ENCODE measurements at regions of chr3 and their contacts with region 1.

Region 1: DNA sequence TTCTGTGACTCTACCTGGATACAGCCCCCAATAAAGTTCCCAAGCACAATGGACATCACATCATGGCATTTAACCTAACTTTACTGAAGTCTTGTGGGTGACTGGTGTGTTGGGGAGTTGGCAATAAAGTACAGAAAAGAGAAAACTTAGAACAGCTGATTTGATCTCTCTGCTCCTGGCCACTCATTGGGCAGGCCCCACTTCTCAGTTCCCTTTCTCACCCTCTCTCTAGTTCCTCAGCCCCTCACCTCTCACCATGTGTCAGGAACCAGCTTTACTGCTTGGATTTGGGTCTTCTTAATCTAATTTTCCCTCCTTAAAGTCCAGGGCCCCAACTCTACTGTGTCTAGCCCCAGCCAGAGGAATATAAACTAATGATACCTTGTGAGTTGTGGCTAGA is 713 bp upstream of the MUC13 start:
- DNase-seq: no peak
- H3K4me3 ChIP-seq: no peak overlapping the region
- H3K27me3 ChIP-seq: no peaks in the 10 kb centered on the region; the same call in 1 of the 2 replicates
- CTCF ChIP-seq: no peak

Region 2: GRCh38 chr3:124700880-124701684 is 234.2 kb before region 1 on chr3:
- CTCF ChIA-PET with region 1: no interaction called
- POLR2A ChIA-PET with region 1: no interaction called
- DNase-seq: no peak
- H3K4me3 ChIP-seq: no peak overlapping the region
- H3K27me3 ChIP-seq: peaks cover under 1% of the 10 kb centered on the region
- CTCF ChIP-seq: no peak

Region 3: GRCh38 chr3:125116311-125117080 is 181.2 kb after region 1 on chr3:
- CTCF ChIA-PET with region 1: no interaction called
- POLR2A ChIA-PET with region 1: interaction called, 10 read pairs
- DNase-seq: peak; percentile 60
- H3K4me3 ChIP-seq: no peak overlapping the region
- H3K27me3 ChIP-seq: no peaks in the 10 kb centered on the region
- CTCF ChIP-seq: no peak